ENCODE measurements at regions of chr3 and their contacts with region 1.

Region 1: GRCh38 chr3:101849051-101849720 is at the start of gene NFKBIZ:
- DNase-seq: peak; percentile 95
- H3K4me3 Mint-ChIP-seq: peak within 1 kb of the TSS; percentile 98
- H3K27ac Mint-ChIP-seq: peak within 1 kb of the TSS; percentile 100
- H3K4me1 Mint-ChIP-seq: peaks cover 45% of the 10 kb centered on the region
- H3K27me3 Mint-ChIP-seq: no peaks in the 10 kb centered on the region
- total RNA-seq, gene NFKBIZ: 76.5 to 81.3 TPM

Region 2: DNA sequence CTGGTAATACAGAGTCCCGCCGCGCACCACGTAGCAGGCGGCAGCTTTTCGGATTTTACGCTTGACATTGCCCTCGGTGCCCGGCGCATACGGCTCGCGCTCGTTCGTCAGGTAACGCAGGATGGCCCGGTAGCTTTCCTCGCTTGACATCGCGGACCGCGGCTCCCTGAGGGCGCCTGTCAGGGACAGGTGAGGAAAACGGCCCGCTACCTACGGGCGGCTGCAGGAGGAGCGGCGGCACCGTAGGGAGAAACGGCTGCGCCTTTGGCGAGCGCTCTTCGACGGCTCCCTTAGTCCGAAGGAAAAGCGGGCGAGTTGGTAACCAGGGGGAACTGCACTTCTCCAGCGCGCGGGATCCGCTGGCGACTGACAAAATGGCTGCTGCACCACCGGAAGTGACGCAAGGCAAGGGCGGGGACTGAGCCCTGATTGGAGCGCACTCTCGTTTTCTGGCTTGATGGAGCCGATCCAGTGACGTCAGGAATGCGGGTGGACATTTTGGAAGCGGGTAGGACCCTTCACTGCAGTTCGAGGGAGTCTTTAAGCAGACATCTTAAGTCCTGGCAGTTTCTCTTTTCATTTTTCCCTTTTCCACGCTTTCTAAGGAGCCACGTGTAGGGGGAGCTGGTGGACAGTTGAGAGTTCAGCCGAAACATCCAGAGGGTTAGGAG is 172.3 kb before region 1 on chr3 and contains the start of gene ZBTB11:
- CTCF ChIA-PET with region 1: no interaction called
- POLR2A ChIA-PET with region 1: interaction called, 15 read pairs
- DNase-seq: peak; percentile 100
- H3K4me3 Mint-ChIP-seq: peak within 1 kb of the TSS; percentile 82
- H3K27ac Mint-ChIP-seq: peak within 1 kb of the TSS; percentile 97
- H3K4me1 Mint-ChIP-seq: peaks cover 57% of the 10 kb centered on the region
- H3K27me3 Mint-ChIP-seq: no peaks in the 10 kb centered on the region
- total RNA-seq, gene ZBTB11: 29.3 to 31.9 TPM

Region 3: GRCh38 chr3:101809178-101810021 is 39.8 kb before region 1 on chr3:
- CTCF ChIA-PET with region 1: interaction called, 9 read pairs
- POLR2A ChIA-PET with region 1: interaction called, 25 read pairs
- DNase-seq: no peak
- H3K4me3 Mint-ChIP-seq: no peak overlapping the region
- H3K27ac Mint-ChIP-seq: no peak overlapping the region
- H3K4me1 Mint-ChIP-seq: peaks cover 59% of the 10 kb centered on the region
- H3K27me3 Mint-ChIP-seq: no peaks in the 10 kb centered on the region

Region 4: GRCh38 chr3:101925573-101925972 is 76.4 kb after region 1 on chr3:
- CTCF ChIA-PET with region 1: no interaction called
- POLR2A ChIA-PET with region 1: interaction called, 14 read pairs
- DNase-seq: no peak
- H3K4me3 Mint-ChIP-seq: no peak overlapping the region
- H3K27ac Mint-ChIP-seq: peak overlapping the region; percentile 11
- H3K4me1 Mint-ChIP-seq: peaks cover 52% of the 10 kb centered on the region
- H3K27me3 Mint-ChIP-seq: peaks cover 22% of the 10 kb centered on the region

Region 5: GRCh38 chr3:102085431-102086176 is 236.4 kb after region 1 on chr3:
- CTCF ChIA-PET with region 1: interaction called, 4 read pairs
- POLR2A ChIA-PET with region 1: interaction called, 19 read pairs
- DNase-seq: no peak
- H3K4me3 Mint-ChIP-seq: no peak overlapping the region
- H3K27ac Mint-ChIP-seq: peak overlapping the region; percentile 67
- H3K4me1 Mint-ChIP-seq: peaks cover 28% of the 10 kb centered on the region
- H3K27me3 Mint-ChIP-seq: peaks cover 5% of the 10 kb centered on the region

Region 6: GRCh38 chr3:102229062-102229655 is 380.0 kb after region 1 on chr3:
- CTCF ChIA-PET with region 1: interaction called, 19 read pairs
- POLR2A ChIA-PET with region 1: interaction called, 41 read pairs
- DNase-seq: peak; percentile 79
- H3K4me3 Mint-ChIP-seq: no peak overlapping the region
- H3K27ac Mint-ChIP-seq: no peak overlapping the region
- H3K4me1 Mint-ChIP-seq: peaks cover 19% of the 10 kb centered on the region
- H3K27me3 Mint-ChIP-seq: peaks cover 16% of the 10 kb centered on the region

Region 7: GRCh38 chr3:102553876-102554275 is 704.7 kb after region 1 on chr3:
- CTCF ChIA-PET with region 1: no interaction called
- POLR2A ChIA-PET with region 1: no interaction called
- DNase-seq: no peak
- H3K4me3 Mint-ChIP-seq: no peak overlapping the region
- H3K27ac Mint-ChIP-seq: no peak overlapping the region
- H3K4me1 Mint-ChIP-seq: no peaks in the 10 kb centered on the region
- H3K27me3 Mint-ChIP-seq: peaks cover 8% of the 10 kb centered on the region

Measured in activated CD4-positive, alpha-beta memory T cell treated with anti-CD3 and anti-CD28 coated beads, Interleukin-2, amount 10 ng/mL, durations not matched to agents 7 days and 5 days (primary cell).